Kidney (tissue), 22 donors: ENCODE measurements at regions of chr2 and their contacts with region 1.

Region 1: DNA sequence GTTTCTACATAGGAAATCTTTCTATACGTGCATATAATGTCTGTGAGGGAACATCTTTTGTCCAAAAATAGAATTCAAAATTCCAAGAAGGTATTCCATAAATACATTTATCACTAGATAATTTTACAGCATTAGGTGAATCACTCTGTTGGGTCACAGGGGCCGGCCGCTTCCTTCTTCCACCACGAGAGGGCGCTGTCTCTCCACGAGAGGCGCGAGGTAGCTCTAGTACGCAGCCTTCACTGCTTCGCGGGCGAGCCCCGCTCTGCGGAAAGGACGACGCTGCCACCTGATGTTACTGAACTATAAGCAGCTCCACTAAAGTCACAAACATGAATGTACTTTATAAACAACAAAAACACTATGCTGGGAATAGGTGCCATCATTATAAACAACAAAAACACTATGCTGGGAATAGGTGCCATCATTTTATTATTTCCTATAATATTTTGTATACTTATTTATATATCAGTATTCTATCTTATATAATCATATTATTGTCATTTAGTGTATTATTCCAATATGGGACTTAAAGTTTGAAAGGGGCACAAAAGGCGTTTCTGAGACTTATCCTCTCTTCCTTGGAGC is 69.4 kb upstream of the REV1 start:
- DNase-seq: peak; percentile 85 to 92 (median 87)
- H3K4me3 ChIP-seq: no peak overlapping the region
- H3K27ac ChIP-seq: no peak overlapping the region
- H3K4me1 ChIP-seq: no peaks in the 10 kb centered on the region
- H3K27me3 ChIP-seq: no peaks in the 10 kb centered on the region
- CTCF ChIP-seq: peak; percentile 98

Region 2: DNA sequence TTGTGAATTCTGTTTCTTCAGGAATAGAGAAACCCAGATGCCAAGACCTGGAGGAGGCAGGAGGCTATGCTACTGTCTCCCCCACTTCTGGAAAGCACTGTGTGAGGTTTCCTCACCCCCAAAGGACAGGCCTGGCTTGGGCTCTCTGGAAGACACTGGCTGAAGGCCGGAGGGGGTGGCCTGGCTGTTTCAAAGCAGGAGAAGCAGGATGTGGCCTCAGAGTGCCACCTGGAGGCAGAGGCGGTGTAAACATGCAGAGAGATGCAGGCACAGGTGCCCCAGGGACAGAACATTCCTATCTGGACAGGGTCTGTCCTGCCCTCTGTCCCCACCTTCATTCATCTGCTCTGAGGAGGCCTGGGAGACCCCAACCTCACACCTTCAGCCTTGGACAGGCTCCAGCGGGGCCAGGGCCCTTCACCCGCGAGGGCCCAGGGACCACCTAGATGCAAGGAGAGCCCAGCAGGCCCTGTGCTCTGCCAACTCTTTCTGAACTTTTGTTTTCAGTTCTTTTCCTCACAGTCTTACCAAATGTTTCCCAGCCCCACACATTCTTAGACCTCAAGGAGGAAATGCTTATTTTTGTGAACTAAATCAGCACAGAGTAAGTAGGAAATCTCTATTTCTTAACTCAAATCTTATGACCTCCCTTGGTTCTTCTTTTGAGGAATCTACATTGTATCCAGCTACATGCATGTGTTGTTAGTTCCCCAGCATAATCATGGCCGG is 683.9 kb after region 1 on chr2:
- intact Hi-C with region 1: loop called (anchors 5 kb)
- DNase-seq: peak in 4 of 5 donors; percentile 84 to 89 (median 85)
- H3K4me3 ChIP-seq: no peak overlapping the region
- H3K27ac ChIP-seq: no peak overlapping the region
- H3K4me1 ChIP-seq: no peaks in the 10 kb centered on the region
- H3K27me3 ChIP-seq: no peaks in the 10 kb centered on the region
- CTCF ChIP-seq: peak; percentile 75